Activated naive CD4-positive, alpha-beta T cell treated with anti-CD3 and anti-CD28 coated beads for 36 hours (primary cell): ENCODE measurements at regions of chr7 and their contacts with region 1.

Region 1: GRCh38 chr7:151017953-151018420 is 6.3 kb downstream of the ATG9B start:
- DNase-seq: peak; percentile 82
- H3K4me3 Mint-ChIP-seq: peak overlapping the region; percentile 72
- H3K27ac Mint-ChIP-seq: no peak overlapping the region
- H3K4me1 Mint-ChIP-seq: peaks cover 50% of the 10 kb centered on the region
- H3K27me3 Mint-ChIP-seq: peaks cover 7% of the 10 kb centered on the region

Region 2: DNA sequence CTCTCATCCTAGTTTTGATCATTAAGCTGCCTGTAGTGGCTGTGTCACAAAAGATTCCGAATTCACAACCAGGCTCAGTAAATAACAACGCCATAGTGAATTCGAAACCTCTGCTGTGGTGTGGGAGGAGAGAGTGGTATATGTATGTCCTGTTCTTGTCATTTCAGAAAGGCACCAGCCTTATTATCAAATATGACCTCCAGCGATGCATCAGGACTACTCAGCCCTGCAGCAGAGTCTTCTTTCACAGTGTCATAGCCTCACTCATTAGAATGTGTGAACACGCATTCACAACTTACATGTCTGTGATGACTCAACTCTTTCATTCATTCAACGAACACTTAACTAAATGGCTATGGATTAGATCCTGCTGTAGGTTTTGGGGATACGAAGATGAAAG is 150.4 kb before region 1 on chr7:
- CTCF ChIA-PET with region 1: no interaction called
- intact Hi-C with region 1: no loop called
- DNase-seq: no peak
- H3K4me3 Mint-ChIP-seq: no peak overlapping the region
- H3K27ac Mint-ChIP-seq: no peak overlapping the region
- H3K4me1 Mint-ChIP-seq: no peaks in the 10 kb centered on the region
- H3K27me3 Mint-ChIP-seq: no peaks in the 10 kb centered on the region

Region 3: GRCh38 chr7:150962553-150963399 is 55.2 kb before region 1 on chr7:
- CTCF ChIA-PET with region 1: interaction called, 32 read pairs
- intact Hi-C with region 1: loop called (anchors 2 kb)
- DNase-seq: peak; percentile 68
- H3K4me3 Mint-ChIP-seq: no peak overlapping the region
- H3K27ac Mint-ChIP-seq: no peak overlapping the region
- H3K4me1 Mint-ChIP-seq: peaks cover 14% of the 10 kb centered on the region
- H3K27me3 Mint-ChIP-seq: peaks cover 16% of the 10 kb centered on the region

Region 4: DNA sequence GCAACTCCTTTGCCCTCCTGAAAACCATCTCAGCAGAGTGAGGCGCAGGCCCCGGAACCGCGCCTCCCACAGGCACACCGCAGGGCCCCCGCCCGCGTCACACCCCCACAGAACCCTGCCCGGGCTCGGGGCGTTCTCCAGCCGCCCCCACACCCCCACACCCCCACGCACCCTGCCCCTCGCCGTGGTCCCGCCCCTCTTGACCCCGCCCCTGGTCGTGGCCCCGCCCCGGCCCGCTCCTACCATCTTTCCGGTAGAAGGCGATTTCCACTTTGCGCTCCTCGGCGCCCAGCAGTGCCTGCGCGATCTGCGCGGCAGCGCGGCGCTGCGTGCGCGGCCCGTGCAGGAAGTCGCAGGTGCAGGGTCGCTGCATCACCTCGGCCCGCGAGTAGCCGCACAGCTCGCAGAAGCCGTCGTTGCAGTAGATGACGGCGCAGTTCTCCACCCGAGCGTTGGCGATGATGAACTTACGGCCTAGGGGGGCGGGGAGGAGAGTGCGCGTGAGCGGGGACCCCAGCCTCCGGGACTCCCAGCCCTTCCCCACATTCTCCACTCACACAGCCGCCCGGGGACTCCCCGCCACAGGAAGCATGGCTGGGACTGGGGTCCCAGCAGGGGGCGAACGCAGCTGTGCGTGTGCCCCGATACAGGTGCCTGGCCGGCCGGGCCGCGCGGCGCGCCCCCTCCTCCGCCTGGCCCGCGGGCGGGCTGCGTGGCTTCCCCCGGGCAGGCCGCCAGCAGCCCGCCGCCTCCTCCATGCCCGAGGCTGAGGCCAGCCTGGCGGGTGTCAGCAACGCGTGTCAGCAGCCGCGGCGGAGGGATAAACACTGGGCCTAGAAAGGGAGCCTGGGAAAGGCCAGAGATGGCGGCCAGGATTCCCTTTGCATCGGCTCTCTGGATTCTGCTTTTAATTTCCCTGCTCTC is 43.3 kb before region 1 on chr7:
- CTCF ChIA-PET with region 1: interaction called, 5 read pairs
- intact Hi-C with region 1: loop called (anchors 1 kb)
- DNase-seq: peak; percentile 78
- H3K4me3 Mint-ChIP-seq: peak overlapping the region; percentile 79
- H3K27ac Mint-ChIP-seq: peak overlapping the region; percentile 36
- H3K4me1 Mint-ChIP-seq: peaks cover 27% of the 10 kb centered on the region
- H3K27me3 Mint-ChIP-seq: peaks cover 25% of the 10 kb centered on the region

Region 5: DNA sequence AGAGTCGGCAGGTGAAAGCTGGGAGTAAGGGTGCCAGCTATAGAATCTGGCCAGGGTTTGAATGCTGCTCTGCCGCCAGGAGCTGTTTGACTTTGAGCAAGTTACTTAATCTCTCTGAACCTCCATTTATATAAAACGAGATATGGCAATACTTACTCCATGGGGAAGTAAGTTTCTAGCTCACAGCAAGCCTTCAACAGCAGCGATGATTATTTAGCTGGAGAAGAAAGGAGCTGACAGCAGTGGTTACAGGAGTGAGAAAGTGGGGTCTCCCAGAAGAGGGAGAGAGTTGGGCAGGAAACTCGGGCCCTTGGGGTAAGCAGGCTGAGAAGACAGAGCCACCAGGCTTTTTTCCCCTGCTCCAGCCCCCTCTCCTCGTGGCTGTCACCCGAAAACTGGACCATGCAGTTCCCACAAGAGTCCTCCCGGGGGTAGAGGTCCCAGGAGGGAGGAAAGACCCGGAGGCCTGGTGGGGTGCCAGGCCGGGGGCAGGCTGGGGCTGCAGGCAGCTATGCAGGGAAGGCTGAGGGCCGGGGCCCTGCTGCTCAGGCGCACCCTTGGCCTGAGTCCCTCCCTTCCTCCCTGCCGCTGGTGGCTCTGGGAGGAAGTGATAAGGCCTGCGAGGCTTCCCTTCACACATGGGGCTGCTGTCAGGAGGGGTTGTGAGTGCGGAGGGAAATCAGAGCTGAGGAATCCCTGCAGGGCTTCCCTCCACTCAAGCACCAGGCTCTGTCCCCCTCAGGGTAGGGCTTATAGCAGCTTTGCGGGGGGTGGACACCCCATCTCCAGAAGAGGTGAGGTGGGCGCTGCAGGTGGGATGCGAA is 23.6 kb before region 1 on chr7:
- CTCF ChIA-PET with region 1: interaction called, 17 read pairs
- intact Hi-C with region 1: loop called (anchors 2 kb)
- DNase-seq: peak; percentile 52
- H3K4me3 Mint-ChIP-seq: peak overlapping the region; percentile 53
- H3K27ac Mint-ChIP-seq: no peak overlapping the region
- H3K4me1 Mint-ChIP-seq: peaks cover 41% of the 10 kb centered on the region
- H3K27me3 Mint-ChIP-seq: no peaks in the 10 kb centered on the region

Region 6: DNA sequence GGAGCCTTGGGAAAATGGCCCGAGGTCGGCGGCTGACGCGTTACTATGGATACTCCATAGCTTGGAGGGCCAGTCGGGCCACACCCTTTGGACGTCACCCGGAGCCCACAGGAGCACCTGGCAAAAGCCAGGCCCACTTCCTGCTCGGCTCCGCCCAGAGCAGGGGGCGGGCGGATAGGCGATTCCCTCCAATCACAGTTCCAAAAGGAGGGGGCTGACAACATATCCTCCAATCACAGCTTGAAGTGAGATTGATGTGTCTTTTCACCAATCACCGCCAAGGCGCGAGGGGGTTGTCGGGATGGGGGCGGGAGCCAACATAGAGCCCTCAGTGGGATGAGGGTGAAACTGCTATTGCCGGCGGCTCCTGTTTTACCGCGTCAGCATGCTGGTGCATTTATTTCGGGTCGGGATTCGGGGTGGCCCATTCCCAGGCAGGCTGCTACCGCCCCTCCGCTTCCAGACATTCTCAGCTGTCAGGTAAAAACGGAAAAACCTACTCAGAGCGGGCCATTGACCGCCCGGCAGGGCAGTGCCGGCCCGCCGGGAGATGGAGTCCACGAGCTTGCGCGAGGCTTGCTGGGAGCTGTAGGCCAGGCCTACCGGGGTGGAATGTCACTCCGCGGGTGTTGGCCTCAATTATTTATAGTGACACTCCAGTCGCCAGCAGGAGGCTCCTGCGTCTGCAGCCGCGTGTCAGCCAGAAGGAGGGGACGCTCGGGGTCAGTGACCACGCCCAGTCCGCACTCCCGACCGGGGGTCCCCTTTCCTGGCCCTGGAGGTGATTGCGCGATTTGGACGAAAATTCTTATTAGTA is 10.4 kb after region 1 on chr7 and contains the start of gene ABCB8:
- CTCF ChIA-PET with region 1: interaction called, 12 read pairs
- intact Hi-C with region 1: no loop called
- DNase-seq: peak; percentile 100
- H3K4me3 Mint-ChIP-seq: peak within 1 kb of the TSS; percentile 91
- H3K27ac Mint-ChIP-seq: peak within 1 kb of the TSS; percentile 90
- H3K4me1 Mint-ChIP-seq: peaks cover 20% of the 10 kb centered on the region
- H3K27me3 Mint-ChIP-seq: no peaks in the 10 kb centered on the region
- total RNA-seq, gene ABCB8: 41.3 to 47.8 TPM

Region 7: GRCh38 chr7:151057989-151058780 is 40.2 kb after region 1 on chr7:
- CTCF ChIA-PET with region 1: interaction called, 4 read pairs
- intact Hi-C with region 1: loop called (anchors 1 kb)
- DNase-seq: peak; percentile 98
- H3K4me3 Mint-ChIP-seq: peak overlapping the region; percentile 85
- H3K27ac Mint-ChIP-seq: peak overlapping the region; percentile 89
- H3K4me1 Mint-ChIP-seq: peaks cover 35% of the 10 kb centered on the region
- H3K27me3 Mint-ChIP-seq: no peaks in the 10 kb centered on the region

Region 8: GRCh38 chr7:151080522-151081169 is 62.7 kb after region 1 on chr7 and contains the start of gene FASTK:
- CTCF ChIA-PET with region 1: interaction called, 3 read pairs
- intact Hi-C with region 1: loop called (anchors 1 kb)
- DNase-seq: peak; percentile 93
- H3K4me3 Mint-ChIP-seq: peak within 1 kb of the TSS; percentile 86
- H3K27ac Mint-ChIP-seq: peak within 1 kb of the TSS; percentile 73
- H3K4me1 Mint-ChIP-seq: peaks cover 36% of the 10 kb centered on the region
- H3K27me3 Mint-ChIP-seq: peaks cover 7% of the 10 kb centered on the region
- total RNA-seq, gene FASTK: 43.6 to 45.7 TPM